MCF 10A (cell line): ENCODE measurements at regions of chr16 and their contacts with region 1.

Region 1: GRCh38 chr16:72989579-72990551 is 58.1 kb downstream of the ZFHX3 start:
- DNase-seq: peak; percentile 94
- H3K4me3 Mint-ChIP-seq: peak overlapping the region; percentile 73
- H3K27ac Mint-ChIP-seq: peak overlapping the region; percentile 95
- H3K4me1 Mint-ChIP-seq: peaks cover 73% of the 10 kb centered on the region
- H3K27me3 Mint-ChIP-seq: no peaks in the 10 kb centered on the region
- CTCF ChIP-seq: no peak

Region 2: GRCh38 chr16:72876221-72876620 is 113.6 kb before region 1 on chr16:
- CTCF ChIA-PET with region 1: no interaction called
- POLR2A ChIA-PET with region 1: interaction called, 5 read pairs
- intact Hi-C with region 1: loop called (anchors 5 kb)
- DNase-seq: peak; percentile 77
- H3K4me3 Mint-ChIP-seq: peak overlapping the region; percentile 38
- H3K27ac Mint-ChIP-seq: peak overlapping the region; percentile 93
- H3K4me1 Mint-ChIP-seq: peaks cover 31% of the 10 kb centered on the region
- H3K27me3 Mint-ChIP-seq: no peaks in the 10 kb centered on the region
- CTCF ChIP-seq: no peak